Activated naive CD4-positive, alpha-beta T cell treated with anti-CD3 and anti-CD28 coated beads for 36 hours (primary cell): ENCODE measurements at regions of chr5 and their contacts with region 1.

Region 1: DNA sequence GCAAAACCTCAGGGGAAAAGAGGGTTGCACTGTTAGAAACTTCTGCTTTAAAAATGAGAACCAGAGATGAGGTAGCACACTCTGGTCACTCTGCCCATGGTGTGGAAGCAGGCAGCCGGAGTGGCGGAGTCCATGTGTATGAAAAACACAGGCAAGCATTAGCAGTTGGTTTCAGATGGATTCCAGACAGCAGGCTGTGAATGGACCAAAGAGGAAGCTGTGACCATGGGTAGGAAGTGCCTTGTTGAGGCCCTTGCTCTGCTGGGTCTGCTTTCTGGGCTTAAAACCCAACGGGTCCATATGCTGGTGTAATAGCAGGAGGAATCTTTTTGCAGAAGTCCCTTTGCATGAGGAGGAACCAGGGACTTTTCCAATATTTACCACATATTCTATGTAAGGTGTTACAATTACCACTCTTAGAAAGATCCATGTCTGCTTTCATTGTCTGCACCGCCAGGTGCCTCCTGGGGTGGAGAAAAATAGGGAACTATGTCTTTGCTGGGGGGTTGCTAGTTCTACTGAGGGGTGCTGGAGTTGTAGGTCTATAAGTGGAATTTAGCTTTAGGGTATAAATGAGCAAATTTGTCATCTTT is 77.0 kb downstream of the ANKRD55 start:
- DNase-seq: no peak
- H3K4me3 Mint-ChIP-seq: peak overlapping the region; percentile 79
- H3K27ac Mint-ChIP-seq: peak overlapping the region; percentile 91
- H3K4me1 Mint-ChIP-seq: peaks cover 88% of the 10 kb centered on the region
- H3K27me3 Mint-ChIP-seq: no peaks in the 10 kb centered on the region

Region 2: GRCh38 chr5:56126487-56127179 is 29.5 kb before region 1 on chr5:
- CTCF ChIA-PET with region 1: no interaction called
- intact Hi-C with region 1: loop called (anchors 1 kb)
- DNase-seq: peak; percentile 83
- H3K4me3 Mint-ChIP-seq: peak overlapping the region; percentile 74
- H3K27ac Mint-ChIP-seq: peak overlapping the region; percentile 97
- H3K4me1 Mint-ChIP-seq: peaks cover 75% of the 10 kb centered on the region
- H3K27me3 Mint-ChIP-seq: no peaks in the 10 kb centered on the region

Region 3: GRCh38 chr5:57066924-57067596 is 911.0 kb after region 1 on chr5:
- CTCF ChIA-PET with region 1: no interaction called
- intact Hi-C with region 1: no loop called
- DNase-seq: no peak
- H3K4me3 Mint-ChIP-seq: no peak overlapping the region
- H3K27ac Mint-ChIP-seq: no peak overlapping the region
- H3K4me1 Mint-ChIP-seq: no peaks in the 10 kb centered on the region
- H3K27me3 Mint-ChIP-seq: peaks cover 6% of the 10 kb centered on the region